ENCODE measurements at regions of chr10 and their contacts with region 1.

Region 1: DNA sequence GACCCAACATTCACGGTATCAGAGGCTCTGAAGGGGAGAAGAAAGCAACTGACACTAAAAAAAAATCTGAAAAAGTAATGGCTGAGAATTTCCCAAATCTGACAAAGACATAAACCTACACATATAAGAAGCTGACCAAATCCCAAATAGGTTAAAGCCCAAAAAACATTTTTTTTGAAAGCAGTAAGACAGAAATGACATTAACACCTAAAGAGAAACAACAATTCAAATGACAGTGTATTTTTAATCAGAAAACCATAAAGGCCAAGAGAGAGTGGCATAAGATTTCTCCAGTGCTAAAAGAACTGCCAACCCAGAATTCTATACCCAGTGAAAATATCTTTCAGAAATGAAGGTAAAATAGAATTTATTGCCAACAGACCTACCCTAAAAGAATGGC is 35.5 kb downstream of the RUFY2 start:
- DNase-seq: no peak
- ATAC-seq: no peak
- H3K4me3 ChIP-seq: no peak overlapping the region
- H3K27ac ChIP-seq: no peak overlapping the region
- H3K4me1 ChIP-seq: no peaks in the 10 kb centered on the region
- H3K27me3 ChIP-seq: no peaks in the 10 kb centered on the region
- CTCF ChIP-seq: no peak

Region 2: GRCh38 chr10:68446179-68446578 is 74.6 kb after region 1 on chr10:
- intact Hi-C with region 1: no loop called
- DNase-seq: no peak
- ATAC-seq: no peak
- H3K4me3 ChIP-seq: no peak overlapping the region
- H3K27ac ChIP-seq: no peak overlapping the region
- H3K4me1 ChIP-seq: no peaks in the 10 kb centered on the region
- H3K27me3 ChIP-seq: no peaks in the 10 kb centered on the region
- CTCF ChIP-seq: no peak

Region 3: GRCh38 chr10:68759967-68760366 is 388.4 kb after region 1 on chr10:
- intact Hi-C with region 1: loop called in 1 of 2 experiments (anchors 10 kb)
- DNase-seq: no peak
- ATAC-seq: no peak
- H3K4me3 ChIP-seq: no peak overlapping the region
- H3K27ac ChIP-seq: no peak overlapping the region
- H3K4me1 ChIP-seq: no peaks in the 10 kb centered on the region
- H3K27me3 ChIP-seq: no peaks in the 10 kb centered on the region
- CTCF ChIP-seq: no peak